T-cell (primary cell): ENCODE measurements at regions of chr13 and their contacts with region 1.

Region 1: GRCh38 chr13:110368408-110368807 is 61.3 kb downstream of the COL4A2 start:
- DNase-seq: no peak
- ATAC-seq: no peak
- H3K4me3 ChIP-seq: no peak overlapping the region
- H3K4me3 Mint-ChIP-seq: no peak overlapping the region
- H3K27ac ChIP-seq: no peak overlapping the region
- H3K27ac Mint-ChIP-seq: no peak overlapping the region
- H3K4me1 ChIP-seq: no peaks in the 10 kb centered on the region
- H3K4me1 Mint-ChIP-seq: no peaks in the 10 kb centered on the region
- H3K27me3 ChIP-seq: peaks cover 0 to under 1% of the 10 kb centered on the region in 2 experiments
- H3K27me3 Mint-ChIP-seq: peaks cover 20 to 21% of the 10 kb centered on the region in 2 donors

Region 2: GRCh38 chr13:110298505-110299282 is 69.7 kb before region 1 on chr13:
- CTCF ChIA-PET with region 1: no interaction called
- POLR2A ChIA-PET with region 1: interaction called in 1 of 2 experiments, 11 read pairs
- DNase-seq: no peak
- ATAC-seq: no peak
- H3K4me3 ChIP-seq: no peak overlapping the region
- H3K4me3 Mint-ChIP-seq: no peak overlapping the region
- H3K27ac ChIP-seq: no peak overlapping the region
- H3K27ac Mint-ChIP-seq: no peak overlapping the region
- H3K4me1 ChIP-seq: peaks cover 0 to 3% of the 10 kb centered on the region in 2 experiments
- H3K4me1 Mint-ChIP-seq: no peaks in the 10 kb centered on the region
- H3K27me3 ChIP-seq: peaks cover 17 to 35% of the 10 kb centered on the region in 2 experiments
- H3K27me3 Mint-ChIP-seq: peaks cover 39 to 50% of the 10 kb centered on the region in 2 donors